Esophagus muscularis mucosa (tissue), 4 donors: ENCODE measurements at regions of chr1 and their contacts with region 1.

Region 1: GRCh38 chr1:93629099-93630059 is 52.3 kb downstream of the BCAR3 start:
- DNase-seq: no peak
- H3K4me3 ChIP-seq: no peak overlapping the region
- H3K27ac ChIP-seq: no peak overlapping the region
- H3K4me1 ChIP-seq: peaks cover 23 to 26% (median 25%) of the 10 kb centered on the region in 4 donors
- H3K27me3 ChIP-seq: no peaks in the 10 kb centered on the region
- CTCF ChIP-seq: peak; percentile 79 to 89 (median 79)
- EP300 ChIP-seq: no peak
- POLR2A ChIP-seq: no peak

Region 2: DNA sequence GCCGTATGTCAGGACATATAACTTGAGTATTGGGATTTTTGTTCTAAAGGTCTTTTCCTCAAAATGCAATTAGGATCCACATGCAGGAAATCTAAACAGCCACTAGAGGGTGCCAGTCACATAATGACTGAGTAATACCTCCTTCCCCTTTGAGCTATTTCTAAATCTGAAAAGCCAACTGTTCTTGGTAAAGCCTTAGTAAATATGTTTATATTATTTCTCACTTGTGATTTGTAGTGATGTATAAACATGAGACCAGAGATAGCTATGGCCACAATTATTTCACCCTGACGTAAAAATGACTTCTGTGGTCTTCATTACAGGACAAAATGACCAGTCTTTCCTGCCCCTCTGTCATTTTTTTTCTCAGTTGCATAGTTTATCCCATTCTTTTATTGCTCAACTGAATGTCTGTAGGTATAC is 324.7 kb before region 1 on chr1:
- intact Hi-C with region 1: loop called (anchors 10 kb)
- DNase-seq: no peak
- H3K4me3 ChIP-seq: no peak overlapping the region
- H3K27ac ChIP-seq: no peak overlapping the region
- H3K4me1 ChIP-seq: no peaks in the 10 kb centered on the region
- H3K27me3 ChIP-seq: no peaks in the 10 kb centered on the region
- CTCF ChIP-seq: peak; percentile 74 to 93 (median 85)
- EP300 ChIP-seq: no peak
- POLR2A ChIP-seq: no peak

Region 3: DNA sequence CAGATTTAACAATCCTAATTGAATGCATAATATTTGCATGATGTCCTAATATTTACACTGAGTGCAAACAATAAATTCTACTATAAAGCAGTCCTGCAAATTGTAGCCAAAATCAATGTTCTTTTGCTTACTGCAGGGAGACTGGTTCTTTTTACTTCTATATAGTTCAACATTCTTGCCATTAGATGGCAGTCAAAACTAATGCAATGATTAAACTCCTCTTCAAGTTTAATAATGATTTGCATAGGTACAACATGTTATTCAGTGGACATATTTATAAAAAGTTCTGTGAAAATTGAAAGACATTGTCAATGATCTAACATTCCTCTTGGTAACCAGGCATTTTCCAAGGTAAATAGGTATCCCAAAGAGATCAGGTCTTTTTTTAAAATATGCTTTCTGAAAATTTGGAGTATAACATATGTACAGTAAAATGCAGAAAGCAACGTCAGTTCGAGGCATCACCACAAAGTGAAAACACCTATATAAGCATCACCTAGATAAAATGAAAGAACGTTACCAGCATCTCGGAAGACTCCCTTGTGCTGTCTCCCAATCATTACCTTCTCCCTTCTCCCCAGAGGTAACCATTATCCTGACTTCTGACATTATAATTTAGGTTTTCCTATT is 191.3 kb before region 1 on chr1:
- intact Hi-C with region 1: loop called (anchors 5 kb)
- DNase-seq: no peak
- H3K4me3 ChIP-seq: no peak overlapping the region
- H3K27ac ChIP-seq: no peak overlapping the region
- H3K4me1 ChIP-seq: no peaks in the 10 kb centered on the region
- H3K27me3 ChIP-seq: peaks cover 0 to 9% (median 0%) of the 10 kb centered on the region in 4 donors
- CTCF ChIP-seq: peak; percentile 68 to 69 (median 69)
- EP300 ChIP-seq: no peak
- POLR2A ChIP-seq: no peak

Region 4: GRCh38 chr1:93652323-93652949 is 23.1 kb after region 1 on chr1:
- intact Hi-C with region 1: no loop called
- DNase-seq: no peak
- H3K4me3 ChIP-seq: no peak overlapping the region
- H3K27ac ChIP-seq: no peak overlapping the region
- H3K4me1 ChIP-seq: peaks cover 0 to 14% (median 3%) of the 10 kb centered on the region in 4 donors
- H3K27me3 ChIP-seq: no peaks in the 10 kb centered on the region
- CTCF ChIP-seq: no peak
- EP300 ChIP-seq: no peak
- POLR2A ChIP-seq: no peak

Region 5: DNA sequence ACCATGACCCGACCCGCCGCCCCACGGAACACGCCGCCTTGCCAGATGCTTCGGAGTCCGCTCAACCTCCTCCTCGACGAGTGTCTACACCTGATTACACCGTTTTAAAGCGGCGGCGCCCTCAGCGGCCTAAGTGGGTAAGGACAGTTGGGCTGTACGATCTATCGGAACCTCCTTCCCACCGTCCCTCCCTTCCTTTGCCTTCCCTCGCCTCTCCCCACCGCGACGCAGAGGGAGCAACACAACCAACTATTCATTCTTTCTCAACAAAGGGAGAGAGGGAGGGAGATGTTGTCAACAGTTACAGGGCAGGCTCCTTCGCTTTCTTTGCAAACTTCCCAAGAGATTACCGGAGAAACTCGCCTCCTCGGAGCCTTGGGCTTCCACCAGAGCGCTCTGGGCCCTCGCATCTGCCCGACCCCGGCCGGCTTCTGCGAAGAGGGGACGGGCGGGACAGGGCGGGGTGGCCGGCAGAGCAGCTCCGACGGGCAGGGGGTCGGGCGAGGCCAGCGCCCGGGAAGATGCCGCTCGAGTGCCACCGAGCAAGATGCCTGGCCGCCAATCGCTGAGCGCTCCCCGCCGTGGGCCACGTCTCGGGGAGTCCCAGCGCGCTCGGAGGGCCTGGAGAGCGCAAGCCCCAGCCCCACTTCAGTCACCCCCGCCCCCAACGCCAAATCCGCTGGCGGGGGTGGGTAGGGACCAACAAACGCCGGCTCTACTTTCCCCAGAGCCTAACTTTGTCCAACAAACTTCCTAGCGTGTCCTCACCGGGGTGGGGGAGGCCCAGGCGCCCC is 51.6 kb after region 1 on chr1:
- intact Hi-C with region 1: loop called (anchors 2 kb)
- DNase-seq: peak; percentile 95
- H3K4me3 ChIP-seq: peak overlapping the region; percentile 79 to 94 (median 88)
- H3K27ac ChIP-seq: peak overlapping the region; percentile 86 to 94 (median 92)
- H3K4me1 ChIP-seq: peaks cover 28 to 51% (median 43%) of the 10 kb centered on the region in 4 donors
- H3K27me3 ChIP-seq: no peaks in the 10 kb centered on the region
- CTCF ChIP-seq: peak; percentile 49 to 78 (median 55)
- EP300 ChIP-seq: no peak
- POLR2A ChIP-seq: no peak

Region 6: DNA sequence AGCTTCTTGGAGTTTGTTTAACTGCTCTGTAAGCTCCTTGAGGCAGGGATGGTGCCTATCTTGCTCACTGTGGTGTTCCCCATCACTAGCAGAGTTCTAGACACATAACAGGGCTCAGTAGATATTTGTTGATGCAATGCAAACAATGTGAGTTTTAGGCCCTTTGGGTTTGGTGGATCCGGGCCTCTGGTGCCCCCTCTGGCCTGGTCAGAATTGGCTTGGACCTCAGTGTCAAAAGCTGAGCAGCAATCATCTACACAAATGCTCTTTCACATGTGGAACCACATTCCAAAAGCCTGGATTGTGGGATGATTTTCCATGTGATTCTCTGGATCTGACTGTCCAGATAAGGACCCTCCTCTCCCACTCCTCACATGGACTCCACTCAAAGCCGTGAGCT is 105.6 kb after region 1 on chr1:
- intact Hi-C with region 1: no loop called
- DNase-seq: no peak
- H3K4me3 ChIP-seq: no peak overlapping the region
- H3K27ac ChIP-seq: no peak overlapping the region
- H3K4me1 ChIP-seq: peaks cover 0 to 3% (median under 1%) of the 10 kb centered on the region in 4 donors
- H3K27me3 ChIP-seq: no peaks in the 10 kb centered on the region
- CTCF ChIP-seq: no peak
- EP300 ChIP-seq: no peak
- POLR2A ChIP-seq: no peak

Region 7: DNA sequence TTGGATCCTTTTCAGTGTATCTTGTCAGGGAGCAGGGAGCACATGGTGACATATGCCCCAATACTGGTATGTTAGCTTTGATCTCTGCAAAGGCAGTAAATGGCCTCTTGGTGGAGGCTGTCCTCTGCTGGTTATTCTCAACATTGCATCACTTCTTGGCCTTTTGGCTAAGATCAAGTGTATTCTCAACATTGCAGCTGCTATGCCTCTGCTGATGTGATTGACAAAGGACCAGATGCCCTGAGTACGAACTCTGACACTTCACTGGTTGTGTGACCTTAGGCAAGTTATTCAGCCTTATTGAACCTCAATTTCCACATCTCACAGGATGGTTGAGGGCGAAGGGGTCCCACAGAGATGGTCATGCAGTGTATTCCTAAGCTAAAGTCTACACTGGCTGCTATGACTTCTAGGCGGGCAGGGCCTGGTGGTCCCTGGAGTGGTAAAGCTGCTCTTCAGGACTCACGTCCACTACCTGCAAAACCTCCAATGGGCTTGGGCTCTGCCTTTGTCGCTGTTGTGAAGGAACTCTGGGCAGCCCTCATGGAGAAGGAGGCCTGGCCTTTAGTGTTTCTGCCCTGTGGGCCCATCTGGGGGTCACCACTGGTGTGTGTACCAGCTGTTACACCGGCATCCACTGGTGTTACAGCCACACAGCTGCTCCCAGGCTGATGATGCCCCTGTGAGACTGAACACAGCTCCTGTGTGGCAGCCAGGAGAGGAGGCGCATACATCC is 184.8 kb after region 1 on chr1:
- intact Hi-C with region 1: loop called (anchors 1 kb)
- DNase-seq: peak; percentile 60
- H3K4me3 ChIP-seq: no peak overlapping the region
- H3K27ac ChIP-seq: no peak overlapping the region
- H3K4me1 ChIP-seq: peaks cover 8 to 35% (median 15%) of the 10 kb centered on the region in 4 donors
- H3K27me3 ChIP-seq: no peaks in the 10 kb centered on the region
- CTCF ChIP-seq: peak; percentile 92 to 99 (median 93)
- EP300 ChIP-seq: no peak
- POLR2A ChIP-seq: no peak

Region 8: DNA sequence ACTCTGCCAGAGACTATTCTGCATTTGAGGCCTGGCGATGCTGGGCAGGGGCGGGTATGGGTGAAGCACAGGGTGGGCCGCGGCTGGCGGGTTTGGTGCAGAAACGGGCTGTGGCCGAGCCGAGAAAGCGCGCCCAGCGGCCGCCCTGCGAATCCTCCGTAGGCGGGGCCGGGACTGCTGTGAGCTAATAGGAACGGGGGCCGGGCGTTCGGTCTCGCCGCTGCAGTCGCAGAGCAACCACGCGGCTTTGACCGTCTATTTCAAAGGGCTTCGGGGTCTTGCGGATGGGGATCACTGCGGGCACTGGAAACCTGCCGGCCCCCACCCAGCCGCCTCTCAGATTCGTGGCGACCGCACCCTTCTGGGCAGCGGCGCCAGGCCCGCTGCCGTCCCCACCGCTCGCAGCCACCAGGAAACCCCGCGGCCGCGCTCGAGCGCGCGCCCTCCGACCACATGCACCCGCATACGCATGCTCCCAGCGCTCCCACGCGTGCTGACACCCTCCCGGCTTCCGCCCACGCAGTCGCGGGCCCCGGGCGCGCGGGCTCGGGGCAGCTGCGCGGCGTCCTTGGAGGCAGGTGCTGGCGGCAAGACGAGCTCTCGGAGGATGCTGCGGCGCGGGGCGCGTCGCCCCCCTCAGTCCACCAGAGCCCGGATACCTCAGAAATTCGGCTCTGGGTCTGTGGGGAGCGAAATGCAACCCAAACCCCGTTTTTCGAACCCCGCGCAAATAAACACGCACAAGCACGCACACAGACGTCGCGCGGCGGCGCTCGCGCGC is 217.0 kb after region 1 on chr1:
- intact Hi-C with region 1: loop called (anchors 10 kb)
- DNase-seq: peak; percentile 98
- H3K4me3 ChIP-seq: peak overlapping the region; percentile 75 to 93 (median 82)
- H3K27ac ChIP-seq: peak overlapping the region; percentile 94 to 100 (median 100)
- H3K4me1 ChIP-seq: peaks cover 24 to 37% (median 33%) of the 10 kb centered on the region in 4 donors
- H3K27me3 ChIP-seq: no peaks in the 10 kb centered on the region
- CTCF ChIP-seq: peak in 2 of 3 experiments; percentile 29 to 66
- EP300 ChIP-seq: no peak
- POLR2A ChIP-seq: peak; percentile 11

Region 9: GRCh38 chr1:94284476-94284875 is 655.1 kb after region 1 on chr1:
- intact Hi-C with region 1: no loop called
- DNase-seq: no peak
- H3K4me3 ChIP-seq: no peak overlapping the region
- H3K27ac ChIP-seq: no peak overlapping the region
- H3K4me1 ChIP-seq: no peaks in the 10 kb centered on the region
- H3K27me3 ChIP-seq: no peaks in the 10 kb centered on the region
- CTCF ChIP-seq: no peak
- EP300 ChIP-seq: no peak
- POLR2A ChIP-seq: no peak